Pancreas (tissue), 10 donors: ENCODE measurements at regions of chr11 and their contacts with region 1.

Region 1: DNA sequence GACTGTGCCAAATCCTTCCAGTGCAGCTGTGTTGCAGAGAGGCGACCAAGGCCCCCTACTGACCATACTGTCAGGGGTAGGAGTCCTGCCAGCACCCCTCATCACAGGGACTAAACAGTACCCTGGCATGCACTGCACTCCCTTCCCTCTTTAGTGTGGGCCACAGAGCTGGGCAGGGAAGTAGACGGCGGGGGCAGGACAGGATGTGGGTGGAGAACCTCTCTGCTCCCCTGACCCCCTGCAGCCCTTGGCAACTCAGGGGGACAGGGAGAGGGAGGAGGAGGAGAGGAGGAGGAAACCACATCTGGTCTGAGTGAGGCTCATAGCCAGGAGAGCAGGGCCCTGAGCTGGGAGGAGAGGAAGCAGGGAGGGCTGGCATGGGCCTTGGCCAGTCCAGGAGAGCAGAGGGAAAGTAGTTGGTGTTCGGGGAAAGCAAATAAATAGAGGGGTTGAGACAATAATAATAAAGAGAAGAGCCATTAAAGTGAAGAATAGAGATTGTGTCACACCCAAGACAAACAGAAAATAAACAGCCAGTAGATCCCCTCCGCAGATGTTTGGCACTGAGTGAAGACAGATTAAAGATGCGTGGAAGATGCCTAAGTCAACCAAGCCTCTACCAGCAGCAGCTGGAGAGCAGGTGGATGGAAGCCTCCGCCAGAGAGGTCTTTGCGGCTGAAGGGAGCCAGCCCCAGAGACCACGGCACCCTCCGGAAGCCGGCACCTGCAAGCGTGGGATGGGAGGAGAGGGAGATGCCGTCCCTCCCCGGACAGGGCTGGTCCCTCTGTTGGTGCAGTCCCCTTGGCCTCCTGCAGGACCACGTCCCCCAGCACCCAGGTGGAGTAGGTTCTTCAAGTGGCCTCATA is 61.5 kb downstream of the RPUSD4 start:
- DNase-seq: no peak
- ATAC-seq: no peak
- H3K4me3 ChIP-seq: no peak overlapping the region
- H3K27ac ChIP-seq: no peak overlapping the region
- H3K4me1 ChIP-seq: no peaks in the 10 kb centered on the region
- H3K27me3 ChIP-seq: no peaks in the 10 kb centered on the region
- CTCF ChIP-seq: no peak

Region 2: GRCh38 chr11:126122863-126123262 is 27.1 kb before region 1 on chr11:
- intact Hi-C with region 1: loop called in 1 of 3 experiments (anchors 2 kb)
- DNase-seq: no peak
- ATAC-seq: peak in 2 of 4 donors; percentile 39 to 41
- H3K4me3 ChIP-seq: no peak overlapping the region
- H3K27ac ChIP-seq: no peak overlapping the region
- H3K4me1 ChIP-seq: no peaks in the 10 kb centered on the region
- H3K27me3 ChIP-seq: no peaks in the 10 kb centered on the region
- CTCF ChIP-seq: no peak

Region 3: GRCh38 chr11:126246636-126247035 is 96.6 kb after region 1 on chr11:
- intact Hi-C with region 1: no loop called
- DNase-seq: no peak
- ATAC-seq: no peak
- H3K4me3 ChIP-seq: no peak overlapping the region
- H3K27ac ChIP-seq: no peak overlapping the region
- H3K4me1 ChIP-seq: no peaks in the 10 kb centered on the region
- H3K27me3 ChIP-seq: no peaks in the 10 kb centered on the region
- CTCF ChIP-seq: no peak